ENCODE measurements at regions of chr13 and their contacts with region 1.

Region 1: GRCh38 chr13:37772644-37773043 is 96.9 kb downstream of the TRPC4 start:
- DNase-seq: no peak
- ATAC-seq: no peak
- H3K4me3 ChIP-seq: no peak overlapping the region
- H3K27ac ChIP-seq: no peak overlapping the region
- H3K4me1 ChIP-seq: no peaks in the 10 kb centered on the region
- H3K27me3 ChIP-seq: no peaks in the 10 kb centered on the region
- CTCF ChIP-seq: no peak
- EP300 ChIP-seq: no peak
- POLR2A ChIP-seq: no peak
- RAD21 ChIP-seq: no peak

Region 2: DNA sequence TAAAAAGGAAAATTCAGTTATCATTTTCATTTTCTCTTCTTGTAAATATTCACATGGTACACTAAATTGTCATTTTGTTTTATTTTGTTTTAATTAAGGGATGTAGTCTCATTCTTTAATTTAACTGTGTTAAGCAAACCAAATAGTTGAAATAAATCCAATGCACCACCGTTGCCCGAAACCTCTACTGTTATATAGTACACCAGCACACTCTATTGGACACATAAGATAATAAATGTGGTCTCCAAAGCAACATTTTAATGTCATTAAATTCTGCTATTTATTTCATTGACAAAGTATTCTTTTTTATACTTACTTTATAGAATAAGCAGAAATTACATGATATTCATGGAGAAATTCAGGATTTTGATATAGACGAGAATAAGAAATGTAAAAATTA is 757.8 kb after region 1 on chr13:
- CTCF ChIA-PET with region 1: no interaction called
- POLR2A ChIA-PET with region 1: no interaction called
- RAD21 ChIA-PET with region 1: no interaction called
- SMC1A ChIA-PET with region 1: no interaction called
- in situ Hi-C with region 1: no loop called
- intact Hi-C with region 1: loop called (anchors 5 kb)
- DNase-seq: no peak
- ATAC-seq: peak; percentile 47; the same call in 1 of the 3 replicates
- H3K4me3 ChIP-seq: no peak overlapping the region
- H3K27ac ChIP-seq: no peak overlapping the region
- H3K4me1 ChIP-seq: no peaks in the 10 kb centered on the region
- H3K27me3 ChIP-seq: no peaks in the 10 kb centered on the region
- CTCF ChIP-seq: peak in 2 of 3 experiments; percentile 24 to 51; a peak in 3 of 6 replicates
- EP300 ChIP-seq: no peak
- POLR2A ChIP-seq: no peak
- RAD21 ChIP-seq: peak; percentile 63

Measured in GM12878 (cell line).